T-cell (primary cell): ENCODE measurements at regions of chr12 and their contacts with region 1.

Region 1: DNA sequence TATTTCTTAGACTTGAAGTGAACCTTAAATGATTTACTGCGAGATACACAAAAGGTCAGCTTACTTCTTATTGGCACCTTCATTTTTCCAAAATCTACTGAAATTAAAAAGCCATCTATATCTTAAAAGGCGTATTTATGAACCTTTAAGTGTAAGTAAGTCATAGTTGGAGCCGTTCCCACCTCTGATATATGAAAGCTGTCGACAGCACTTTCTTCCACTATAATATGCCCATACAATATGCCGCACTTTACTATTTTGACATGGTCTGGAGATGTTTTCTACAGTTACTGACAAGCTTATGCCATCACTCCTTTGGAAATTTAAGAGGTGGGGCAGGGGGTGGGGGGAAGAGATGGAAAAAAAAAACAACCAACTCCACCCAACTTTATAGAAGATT is 155.3 kb downstream of the PHETA1 start:
- DNase-seq: no peak
- ATAC-seq: no peak
- H3K4me3 ChIP-seq: no peak overlapping the region
- H3K4me3 Mint-ChIP-seq: no peak overlapping the region
- H3K27ac ChIP-seq: no peak overlapping the region
- H3K27ac Mint-ChIP-seq: no peak overlapping the region
- H3K4me1 ChIP-seq: no peaks in the 10 kb centered on the region
- H3K4me1 Mint-ChIP-seq: no peaks in the 10 kb centered on the region
- H3K27me3 ChIP-seq: peaks cover 0 to 32% of the 10 kb centered on the region in 2 experiments
- H3K27me3 Mint-ChIP-seq: peaks cover 10 to 33% of the 10 kb centered on the region in 2 donors

Region 2: DNA sequence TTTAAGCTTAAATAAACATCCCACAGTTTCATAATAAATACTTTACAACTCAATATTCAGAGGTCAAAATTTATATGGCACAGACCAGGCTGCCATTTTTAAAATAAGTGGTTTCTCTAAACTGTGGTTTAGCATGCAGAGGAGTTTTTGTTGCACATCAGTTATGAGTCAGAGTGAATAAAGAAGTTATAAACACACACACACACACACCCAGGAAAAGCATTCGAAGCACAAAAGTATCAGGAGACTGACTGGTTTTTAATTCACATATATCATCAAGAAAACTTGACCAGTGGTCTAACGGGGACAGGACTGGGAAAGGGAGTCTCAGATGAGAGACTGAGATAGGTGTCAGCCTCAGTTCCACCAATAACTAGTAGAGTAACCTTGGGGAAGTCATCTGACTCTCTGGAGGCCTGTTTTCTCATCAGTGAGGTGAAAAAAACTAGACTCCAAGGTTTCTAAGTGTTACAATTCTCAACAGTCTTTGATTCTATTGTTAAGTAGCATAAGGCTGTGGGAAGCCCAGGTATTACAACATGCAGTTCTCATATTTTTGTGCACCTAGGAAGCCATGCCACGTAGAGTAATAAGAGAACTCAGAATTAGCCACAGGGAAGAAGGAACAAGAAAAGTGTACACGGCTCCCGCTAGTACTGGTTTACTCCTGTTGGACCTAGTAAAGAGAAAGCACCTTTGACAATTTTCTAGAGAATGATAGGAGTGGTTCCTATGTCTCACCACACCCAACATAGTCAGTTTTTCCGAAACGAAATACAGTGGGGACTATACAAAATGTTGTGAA is 635.6 kb before region 1 on chr12:
- CTCF ChIA-PET with region 1: no interaction called
- POLR2A ChIA-PET with region 1: no interaction called
- DNase-seq: peak in 2 of 35 experiments; percentile 15 to 60
- ATAC-seq: peak; percentile 9 to 55 (median 48)
- H3K4me3 ChIP-seq: no peak overlapping the region
- H3K4me3 Mint-ChIP-seq: peak overlapping the region; percentile 73 to 93 (median 91)
- H3K27ac ChIP-seq: peak overlapping the region; percentile 97
- H3K27ac Mint-ChIP-seq: peak overlapping the region; percentile 84 to 96
- H3K4me1 ChIP-seq: peaks cover 42 to 57% of the 10 kb centered on the region in 2 experiments
- H3K4me1 Mint-ChIP-seq: peaks cover 75 to 79% (median 77%) of the 10 kb centered on the region in 3 donors
- H3K27me3 ChIP-seq: no peaks in the 10 kb centered on the region
- H3K27me3 Mint-ChIP-seq: no peaks in the 10 kb centered on the region

Region 3: DNA sequence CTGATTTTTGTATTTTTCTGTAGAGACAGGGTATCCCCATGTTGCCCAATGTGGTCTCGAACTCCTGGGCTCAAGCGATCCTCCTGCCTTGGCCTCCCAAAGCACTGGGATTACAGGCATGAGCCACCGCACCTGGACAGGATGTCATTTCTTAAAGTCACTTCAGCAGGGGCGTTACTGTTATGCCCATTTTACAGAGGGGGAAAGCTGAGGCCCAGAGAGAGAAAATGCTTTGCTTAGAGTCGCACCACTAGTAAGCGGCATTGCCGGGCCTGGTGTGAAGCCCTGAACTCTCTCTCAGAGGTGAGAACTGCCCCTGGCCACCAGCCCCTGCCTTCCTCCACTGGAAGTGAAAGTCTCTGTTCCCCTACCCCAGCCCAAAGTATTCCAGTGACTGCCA is 51.7 kb before region 1 on chr12:
- CTCF ChIA-PET with region 1: interaction called in 1 of 2 experiments, 10 read pairs
- POLR2A ChIA-PET with region 1: no interaction called
- DNase-seq: no peak
- ATAC-seq: no peak
- H3K4me3 ChIP-seq: no peak overlapping the region
- H3K4me3 Mint-ChIP-seq: no peak overlapping the region
- H3K27ac ChIP-seq: no peak overlapping the region
- H3K27ac Mint-ChIP-seq: no peak overlapping the region
- H3K4me1 ChIP-seq: no peaks in the 10 kb centered on the region
- H3K4me1 Mint-ChIP-seq: no peaks in the 10 kb centered on the region
- H3K27me3 ChIP-seq: peaks cover 0 to 17% of the 10 kb centered on the region in 2 experiments
- H3K27me3 Mint-ChIP-seq: peaks cover 3 to 5% of the 10 kb centered on the region in 2 donors

Region 4: GRCh38 chr12:111248236-111249017 is 34.9 kb after region 1 on chr12:
- CTCF ChIA-PET with region 1: no interaction called
- POLR2A ChIA-PET with region 1: no interaction called
- DNase-seq: peak in 1 of 35 experiments; percentile 15
- ATAC-seq: no peak
- H3K4me3 ChIP-seq: no peak overlapping the region
- H3K4me3 Mint-ChIP-seq: no peak overlapping the region
- H3K27ac ChIP-seq: no peak overlapping the region
- H3K27ac Mint-ChIP-seq: no peak overlapping the region
- H3K4me1 ChIP-seq: no peaks in the 10 kb centered on the region
- H3K4me1 Mint-ChIP-seq: no peaks in the 10 kb centered on the region
- H3K27me3 ChIP-seq: peaks cover 0 to 44% of the 10 kb centered on the region in 2 experiments
- H3K27me3 Mint-ChIP-seq: peaks cover 5 to 18% of the 10 kb centered on the region in 2 donors

Region 5: GRCh38 chr12:111405149-111405860 is 191.7 kb after region 1 on chr12:
- CTCF ChIA-PET with region 1: no interaction called
- POLR2A ChIA-PET with region 1: no interaction called
- DNase-seq: peak; percentile 94 to 100 (median 98)
- ATAC-seq: peak; percentile 77 to 83 (median 78)
- H3K4me3 ChIP-seq: peak overlapping the region; percentile 26 to 65
- H3K4me3 Mint-ChIP-seq: peak overlapping the region; percentile 81 to 85 (median 85)
- H3K27ac ChIP-seq: peak overlapping the region; percentile 70
- H3K27ac Mint-ChIP-seq: peak overlapping the region; percentile 90 to 92
- H3K4me1 ChIP-seq: peaks cover 30 to 68% of the 10 kb centered on the region in 2 experiments
- H3K4me1 Mint-ChIP-seq: peaks cover 58 to 63% (median 59%) of the 10 kb centered on the region in 3 donors
- H3K27me3 ChIP-seq: no peaks in the 10 kb centered on the region
- H3K27me3 Mint-ChIP-seq: no peaks in the 10 kb centered on the region